ENCODE measurements at regions of chr15 and their contacts with region 1.

Region 1: DNA sequence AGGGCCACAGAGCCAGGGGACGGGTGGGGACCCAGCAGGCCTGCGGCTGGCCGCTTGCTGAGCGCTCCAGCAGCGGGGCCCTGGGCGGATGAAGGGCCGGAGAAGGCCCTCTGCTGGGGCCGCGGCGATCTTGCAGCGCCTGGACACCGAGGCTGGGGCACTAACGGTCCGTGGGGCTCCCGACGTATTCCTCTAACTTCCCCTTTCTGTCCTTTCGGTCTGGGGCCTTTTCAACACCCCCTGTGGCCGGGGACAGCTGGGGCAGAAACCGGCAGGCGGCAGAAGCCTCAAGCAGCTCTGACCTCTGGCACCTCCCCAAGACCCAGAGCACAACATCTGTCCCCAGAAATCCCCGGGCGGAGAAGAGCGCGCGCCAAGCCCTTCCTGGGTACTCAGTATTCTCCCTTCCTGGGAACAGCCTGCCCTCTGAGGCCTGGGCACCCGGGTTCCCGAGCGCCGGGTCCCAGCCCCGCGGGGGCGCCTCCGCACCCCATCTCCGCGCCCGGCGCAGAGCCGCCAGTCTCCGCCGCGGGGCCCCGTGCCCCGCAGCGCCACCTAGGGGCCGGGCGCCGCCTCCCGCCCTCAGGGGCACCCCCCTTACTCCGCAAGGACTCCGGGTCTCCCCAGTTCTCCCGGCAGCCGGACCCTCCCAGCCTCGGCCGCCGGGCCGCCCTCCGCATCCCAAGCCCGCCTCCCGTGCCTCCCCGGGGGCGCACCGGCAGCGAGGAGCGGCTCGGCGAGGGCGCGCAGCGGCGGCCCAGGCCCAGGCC is 582 bp upstream of the SLCO3A1 start:
- DNase-seq: peak; percentile 82
- ATAC-seq: peak; percentile 68
- H3K4me3 Mint-ChIP-seq: peak overlapping the region; percentile 74
- H3K27ac Mint-ChIP-seq: peak overlapping the region; percentile 88
- H3K4me1 Mint-ChIP-seq: peaks cover 55% of the 10 kb centered on the region
- H3K27me3 Mint-ChIP-seq: peaks cover 3% of the 10 kb centered on the region

Region 2: GRCh38 chr15:90839187-90840071 is 1013.5 kb before region 1 on chr15:
- CTCF ChIA-PET with region 1: no interaction called
- POLR2A ChIA-PET with region 1: no interaction called
- intact Hi-C with region 1: loop called in 1 of 2 experiments (anchors 10 kb)
- DNase-seq: peak; percentile 75
- ATAC-seq: peak; percentile 34
- H3K4me3 Mint-ChIP-seq: peak overlapping the region; percentile 80
- H3K27ac Mint-ChIP-seq: peak overlapping the region; percentile 92
- H3K4me1 Mint-ChIP-seq: peaks cover 63% of the 10 kb centered on the region
- H3K27me3 Mint-ChIP-seq: no peaks in the 10 kb centered on the region

Region 3: DNA sequence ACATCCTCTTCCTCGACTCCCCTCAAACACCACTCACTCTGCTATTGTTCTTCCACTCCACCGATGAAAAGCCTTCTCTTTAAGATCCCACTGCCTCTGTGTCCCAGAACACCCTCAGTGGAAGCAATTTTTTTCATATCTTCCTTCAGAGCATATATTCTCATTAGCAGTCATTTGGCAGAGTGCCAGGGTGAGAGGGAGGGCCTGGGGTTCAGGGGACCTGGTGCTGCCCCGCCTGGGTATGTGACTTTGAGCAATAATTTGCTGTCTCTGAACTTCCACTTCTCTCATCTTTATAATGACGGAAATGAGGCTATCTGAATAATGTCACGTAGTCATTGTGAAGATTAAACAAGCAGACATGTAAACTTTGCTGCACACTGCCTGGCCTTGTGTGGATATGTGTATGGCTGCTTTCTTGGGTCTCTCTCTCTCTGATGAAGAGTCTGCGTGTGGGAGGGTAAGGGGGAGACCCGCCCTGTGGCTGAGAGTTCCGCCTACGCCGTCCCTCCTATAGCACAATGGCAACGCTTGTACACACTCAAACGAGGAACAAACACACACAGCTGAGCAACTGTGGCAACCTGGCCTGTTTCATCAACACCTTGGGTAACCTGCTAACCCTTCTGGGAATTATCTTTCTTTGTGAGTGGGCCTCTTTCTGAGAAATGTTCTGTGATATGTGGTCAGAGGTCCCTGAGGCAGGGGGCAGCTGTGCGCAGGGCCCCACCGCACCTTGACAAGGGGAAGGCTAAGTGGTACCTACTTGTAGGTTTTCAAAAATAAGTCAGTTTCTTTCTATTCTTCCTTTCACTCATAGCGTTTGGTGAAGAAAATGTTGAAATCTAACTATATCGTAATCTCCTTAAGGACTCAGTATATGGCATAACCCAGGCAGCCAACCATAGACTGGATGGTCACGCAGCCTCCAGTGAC is 383.0 kb before region 1 on chr15:
- CTCF ChIA-PET with region 1: no interaction called
- POLR2A ChIA-PET with region 1: no interaction called
- intact Hi-C with region 1: loop called in 1 of 2 experiments (anchors 10 kb)
- DNase-seq: peak; percentile 77
- ATAC-seq: peak; percentile 76
- H3K4me3 Mint-ChIP-seq: peak overlapping the region; percentile 43
- H3K27ac Mint-ChIP-seq: peak overlapping the region; percentile 89
- H3K4me1 Mint-ChIP-seq: peaks cover 43% of the 10 kb centered on the region
- H3K27me3 Mint-ChIP-seq: peaks cover 3% of the 10 kb centered on the region

Region 4: DNA sequence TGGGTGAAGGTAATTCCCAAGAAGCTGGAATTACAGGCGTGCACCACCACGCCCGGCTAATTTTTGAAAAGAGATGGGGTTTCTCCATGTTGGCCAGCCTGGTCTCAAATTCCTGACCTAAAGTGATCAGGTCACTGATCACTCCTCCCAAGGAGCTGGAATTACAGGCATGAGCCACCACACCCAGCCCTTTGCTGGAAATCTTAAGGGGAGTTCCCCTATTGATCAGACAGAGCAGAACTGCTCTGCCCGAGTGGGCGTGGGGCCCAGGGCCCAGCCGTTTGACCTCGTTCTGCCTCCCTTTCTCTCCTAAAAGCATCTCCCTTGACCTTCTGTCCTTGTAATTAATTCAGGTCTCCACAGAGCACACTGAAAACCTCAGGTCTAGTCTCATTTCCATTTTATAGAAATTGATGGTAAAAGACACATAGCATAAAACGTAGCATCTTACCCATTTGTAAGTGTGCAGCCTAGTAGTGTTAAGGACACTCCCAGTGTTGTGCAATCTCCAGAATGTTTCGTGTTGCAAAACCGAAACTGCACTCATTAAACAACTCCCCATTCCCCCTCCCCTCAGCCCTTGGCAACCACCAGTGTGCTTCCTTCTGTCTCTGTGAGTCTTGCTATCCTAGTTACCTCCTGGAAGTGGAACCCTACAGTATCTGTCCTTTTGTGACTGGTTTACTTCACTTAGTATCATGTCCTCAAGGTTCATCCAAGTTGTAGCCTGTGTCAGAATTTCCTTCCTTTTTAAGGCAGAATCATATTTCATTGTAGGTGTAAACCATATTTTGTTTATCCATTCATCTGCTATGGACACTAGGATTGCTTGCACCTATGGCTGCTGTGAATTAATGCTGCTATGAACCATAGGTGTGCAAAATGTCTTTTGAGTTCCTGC is 90.0 kb after region 1 on chr15:
- CTCF ChIA-PET with region 1: interaction called, 4 read pairs
- POLR2A ChIA-PET with region 1: interaction called, 4 read pairs
- intact Hi-C with region 1: loop called (anchors 2 kb)
- DNase-seq: peak; percentile 63
- ATAC-seq: peak; percentile 65
- H3K4me3 Mint-ChIP-seq: no peak overlapping the region
- H3K27ac Mint-ChIP-seq: peak overlapping the region; percentile 32
- H3K4me1 Mint-ChIP-seq: peaks cover 48% of the 10 kb centered on the region
- H3K27me3 Mint-ChIP-seq: no peaks in the 10 kb centered on the region

Region 5: DNA sequence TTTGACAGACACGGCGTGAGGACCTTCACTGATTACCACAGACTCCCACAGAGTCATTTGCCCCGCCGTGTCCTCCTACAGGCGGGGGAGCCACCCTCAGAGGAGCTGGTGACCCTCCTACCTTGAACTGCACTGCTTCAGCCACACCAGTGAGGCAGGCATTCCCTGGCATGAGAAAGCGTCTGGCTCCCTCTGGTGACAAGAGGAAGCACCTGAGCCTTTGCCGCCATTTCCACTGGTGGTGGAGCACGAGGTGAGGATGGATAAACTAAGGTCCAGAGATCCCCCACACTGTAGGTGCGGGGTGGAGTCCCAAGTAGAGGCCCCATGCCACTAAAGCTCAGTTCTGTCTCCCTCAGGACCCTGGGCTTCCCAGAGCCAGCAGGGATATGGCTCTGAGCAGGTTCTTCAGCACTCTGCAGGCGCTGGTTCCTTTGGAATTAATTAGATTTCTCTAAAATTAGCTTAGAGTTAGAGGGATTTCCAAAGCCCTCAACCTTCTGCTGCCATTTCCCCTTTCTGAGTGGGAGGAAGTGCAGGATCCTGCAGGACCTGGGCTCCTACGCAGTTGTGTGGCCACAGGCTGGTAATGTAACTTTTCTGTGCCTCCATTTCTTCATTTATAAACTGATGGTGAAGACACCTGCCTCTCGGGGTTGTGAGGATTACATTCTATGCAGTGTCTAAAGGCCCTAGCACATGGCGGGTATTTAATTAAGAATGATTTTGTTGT is 224.6 kb after region 1 on chr15:
- CTCF ChIA-PET with region 1: interaction called, 10 read pairs
- POLR2A ChIA-PET with region 1: no interaction called
- intact Hi-C with region 1: loop called (anchors 1 kb)
- DNase-seq: peak; percentile 86
- ATAC-seq: peak; percentile 87
- H3K4me3 Mint-ChIP-seq: no peak overlapping the region
- H3K27ac Mint-ChIP-seq: no peak overlapping the region
- H3K4me1 Mint-ChIP-seq: peaks cover 23% of the 10 kb centered on the region
- H3K27me3 Mint-ChIP-seq: no peaks in the 10 kb centered on the region

Region 6: DNA sequence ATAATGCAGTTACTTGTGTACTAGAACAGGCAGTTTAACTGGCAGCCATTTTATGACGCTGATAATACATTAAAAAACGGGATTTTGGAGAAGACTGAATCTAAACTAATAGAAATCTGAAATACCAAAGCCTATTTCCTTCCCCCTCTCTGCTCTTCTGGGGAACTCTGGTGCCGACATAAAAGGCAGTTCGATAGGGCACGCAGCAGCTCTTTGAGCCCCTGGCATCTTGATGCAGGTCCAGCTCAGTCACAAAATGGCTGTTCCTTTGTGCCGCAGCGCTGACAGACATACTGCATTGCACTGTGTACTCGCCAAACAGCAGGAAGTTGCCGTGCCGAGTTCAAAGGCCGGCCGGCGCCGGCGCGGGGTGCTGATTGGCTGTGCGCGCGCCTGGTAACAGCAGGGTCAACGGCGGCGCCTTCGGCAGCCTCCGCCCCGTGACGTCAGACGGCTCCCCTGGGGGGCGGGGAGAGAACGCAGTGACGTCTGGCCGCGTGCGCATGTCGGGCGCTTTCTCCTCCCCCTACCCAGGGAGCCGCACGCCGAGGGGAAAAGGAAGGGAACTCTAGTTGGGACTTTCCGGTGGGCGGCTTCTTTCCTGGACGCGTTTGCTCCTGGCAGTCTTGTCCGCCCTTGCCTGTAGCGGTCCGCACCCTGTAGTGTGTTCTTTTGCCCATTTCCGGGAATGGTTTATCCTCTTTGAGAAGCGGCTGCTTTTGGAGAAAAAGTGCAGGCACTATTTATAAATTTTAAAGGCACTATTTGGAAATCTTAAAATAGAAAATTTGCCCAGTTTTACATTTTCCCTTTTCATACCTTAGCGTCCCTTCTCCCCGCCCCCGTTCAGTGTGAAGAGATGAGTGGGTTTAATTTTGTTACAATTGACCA is 1051.3 kb after region 1 on chr15:
- CTCF ChIA-PET with region 1: no interaction called
- POLR2A ChIA-PET with region 1: no interaction called
- intact Hi-C with region 1: loop called in 1 of 2 experiments (anchors 10 kb)
- DNase-seq: peak; percentile 100
- ATAC-seq: peak; percentile 80
- H3K4me3 Mint-ChIP-seq: peak overlapping the region; percentile 81
- H3K27ac Mint-ChIP-seq: peak overlapping the region; percentile 98
- H3K4me1 Mint-ChIP-seq: peaks cover 48% of the 10 kb centered on the region
- H3K27me3 Mint-ChIP-seq: no peaks in the 10 kb centered on the region